Dendritic cell treated with granulocyte-macrophage colony-stimulating factor and Interleukin-4, amounts not matched to agents 40 ng/mL and 50 ng/mL, for 4 days (primary cell): ENCODE measurements at regions of chr1 and their contacts with region 1.

Region 1: DNA sequence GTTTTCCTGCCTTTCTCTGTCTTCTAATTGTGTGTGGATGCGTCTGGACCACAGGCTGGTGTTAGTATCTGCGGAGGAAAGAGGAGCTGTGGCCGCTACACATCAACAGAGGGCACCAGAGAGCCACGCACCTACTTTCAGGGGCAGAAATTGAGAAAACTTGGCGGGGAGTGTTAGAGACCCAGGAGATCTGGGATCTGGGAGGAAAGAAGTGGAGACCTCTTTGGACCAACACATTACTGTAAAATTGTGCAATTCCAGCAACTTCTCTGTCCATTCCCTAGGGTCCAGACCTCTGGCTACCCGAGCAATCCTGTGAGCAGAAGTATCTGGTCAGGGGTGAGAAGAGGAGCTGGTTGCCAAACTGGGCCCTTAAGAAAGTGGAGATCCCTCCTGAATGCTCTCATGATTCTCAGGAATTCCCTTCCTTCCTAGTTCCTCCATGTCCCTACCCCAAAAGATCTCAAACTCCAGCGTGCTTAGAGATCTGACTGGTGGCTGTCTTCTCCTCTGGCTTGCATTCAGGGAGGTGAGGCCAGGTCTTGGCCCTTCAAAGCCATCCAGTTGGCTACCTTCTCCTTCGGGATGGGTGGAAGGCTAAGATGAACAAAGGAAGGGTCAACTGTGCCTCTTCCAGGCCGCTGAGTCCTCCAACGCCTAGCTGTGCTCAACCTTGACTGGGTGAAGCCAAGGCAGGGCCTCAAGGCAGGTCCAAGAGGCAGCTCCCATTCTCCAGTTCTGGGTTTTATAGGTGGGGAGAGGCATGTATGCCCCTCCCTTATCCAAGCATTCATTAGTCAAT is 1.2 kb upstream of the KIRREL1 start:
- H3K4me3 Mint-ChIP-seq: no peak overlapping the region
- H3K27ac Mint-ChIP-seq: no peak overlapping the region
- H3K4me1 Mint-ChIP-seq: peaks cover 9% of the 10 kb centered on the region
- H3K27me3 Mint-ChIP-seq: peaks cover 63% of the 10 kb centered on the region

Region 2: GRCh38 chr1:158035976-158036583 is 43.8 kb after region 1 on chr1:
- intact Hi-C with region 1: loop called (anchors 1 kb)
- H3K4me3 Mint-ChIP-seq: no peak overlapping the region
- H3K27ac Mint-ChIP-seq: no peak overlapping the region
- H3K4me1 Mint-ChIP-seq: peaks cover 10% of the 10 kb centered on the region
- H3K27me3 Mint-ChIP-seq: peaks cover 25% of the 10 kb centered on the region

Region 3: DNA sequence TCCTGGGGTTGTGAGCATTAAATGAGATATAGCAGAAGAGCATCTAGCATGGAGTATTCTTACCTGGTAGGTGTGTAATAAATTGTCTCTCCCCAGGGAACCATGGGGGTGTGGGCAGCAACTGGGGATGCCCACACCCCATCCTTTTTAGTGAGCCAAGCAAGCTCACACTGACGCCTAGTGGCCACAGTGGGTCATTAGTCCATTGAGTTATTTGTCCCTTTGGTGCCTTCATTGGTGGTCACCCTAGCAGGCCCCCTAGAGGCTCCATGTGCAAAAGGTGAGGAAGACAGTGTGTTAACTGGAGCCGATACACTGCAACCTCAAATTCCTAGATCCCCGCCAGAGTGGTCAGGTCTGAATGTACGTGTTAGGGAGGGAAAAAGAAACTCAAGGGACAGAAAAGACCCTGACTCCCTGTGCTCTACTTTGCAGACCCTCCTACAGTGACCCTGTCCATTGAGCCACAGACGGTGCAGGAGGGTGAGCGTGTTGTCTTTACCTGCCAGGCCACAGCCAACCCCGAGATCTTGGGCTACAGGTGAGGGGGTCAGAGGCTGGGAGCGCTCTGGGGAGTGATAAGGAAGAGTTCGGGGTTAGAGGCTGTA is 95.2 kb after region 1 on chr1:
- intact Hi-C with region 1: loop called (anchors 1 kb)
- H3K4me3 Mint-ChIP-seq: no peak overlapping the region
- H3K27ac Mint-ChIP-seq: no peak overlapping the region
- H3K4me1 Mint-ChIP-seq: no peaks in the 10 kb centered on the region
- H3K27me3 Mint-ChIP-seq: peaks cover 10% of the 10 kb centered on the region

Region 4: GRCh38 chr1:158124999-158125398 is 132.8 kb after region 1 on chr1:
- intact Hi-C with region 1: loop called (anchors 10 kb)
- H3K4me3 Mint-ChIP-seq: no peak overlapping the region
- H3K27ac Mint-ChIP-seq: no peak overlapping the region
- H3K4me1 Mint-ChIP-seq: peaks cover 4% of the 10 kb centered on the region
- H3K27me3 Mint-ChIP-seq: peaks cover 37% of the 10 kb centered on the region